ENCODE measurements at regions of chr4 and their contacts with region 1.

Region 1: DNA sequence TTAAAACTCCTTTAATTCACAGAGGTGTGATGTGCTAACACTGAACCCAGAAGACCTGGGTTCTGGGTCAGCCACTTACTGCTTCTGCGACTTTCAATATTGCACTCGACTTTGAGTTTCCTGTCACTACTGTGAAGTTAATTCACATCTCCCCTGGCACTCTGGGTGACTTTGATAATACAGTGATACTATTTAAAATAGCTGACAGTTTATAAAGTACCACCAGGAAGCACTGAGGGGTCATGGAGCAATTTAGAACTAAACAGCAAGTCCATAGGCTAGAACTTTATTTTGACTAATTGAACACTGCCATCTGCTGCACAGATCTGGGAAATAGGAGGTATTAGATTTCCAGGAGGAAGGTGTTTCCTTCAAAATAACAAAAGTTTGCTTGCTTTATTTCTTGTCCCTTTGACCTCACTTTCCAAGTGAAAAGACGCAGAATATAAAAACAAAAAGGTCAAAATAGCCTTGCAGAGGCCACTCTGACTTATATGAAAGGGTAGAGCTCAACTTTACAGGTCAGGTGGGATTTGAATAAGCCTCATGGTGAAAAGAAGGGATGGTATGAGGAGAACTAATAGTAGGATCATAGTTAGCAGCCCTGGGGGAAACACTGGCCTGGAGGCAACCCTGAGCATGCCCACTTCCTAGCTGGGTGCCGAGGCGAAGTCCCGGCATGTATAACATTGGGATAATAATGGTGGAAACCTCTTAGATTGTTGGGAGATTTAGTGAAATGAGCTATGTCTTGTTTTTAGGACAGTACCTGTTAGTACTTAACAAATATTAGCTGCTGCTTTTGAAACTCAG is 53.4 kb downstream of the ZNF518B start:
- DNase-seq: peak; percentile 2 to 17 (median 15)
- H3K4me3 ChIP-seq: no peak overlapping the region
- H3K4me3 Mint-ChIP-seq: no peak overlapping the region
- H3K27ac ChIP-seq: no peak overlapping the region
- H3K27ac Mint-ChIP-seq: no peak overlapping the region
- H3K4me1 ChIP-seq: no peaks in the 10 kb centered on the region
- H3K4me1 Mint-ChIP-seq: no peaks in the 10 kb centered on the region
- H3K27me3 ChIP-seq: no peaks in the 10 kb centered on the region
- H3K27me3 Mint-ChIP-seq: no peaks in the 10 kb centered on the region
- CTCF ChIP-seq: peak; percentile 16

Region 2: DNA sequence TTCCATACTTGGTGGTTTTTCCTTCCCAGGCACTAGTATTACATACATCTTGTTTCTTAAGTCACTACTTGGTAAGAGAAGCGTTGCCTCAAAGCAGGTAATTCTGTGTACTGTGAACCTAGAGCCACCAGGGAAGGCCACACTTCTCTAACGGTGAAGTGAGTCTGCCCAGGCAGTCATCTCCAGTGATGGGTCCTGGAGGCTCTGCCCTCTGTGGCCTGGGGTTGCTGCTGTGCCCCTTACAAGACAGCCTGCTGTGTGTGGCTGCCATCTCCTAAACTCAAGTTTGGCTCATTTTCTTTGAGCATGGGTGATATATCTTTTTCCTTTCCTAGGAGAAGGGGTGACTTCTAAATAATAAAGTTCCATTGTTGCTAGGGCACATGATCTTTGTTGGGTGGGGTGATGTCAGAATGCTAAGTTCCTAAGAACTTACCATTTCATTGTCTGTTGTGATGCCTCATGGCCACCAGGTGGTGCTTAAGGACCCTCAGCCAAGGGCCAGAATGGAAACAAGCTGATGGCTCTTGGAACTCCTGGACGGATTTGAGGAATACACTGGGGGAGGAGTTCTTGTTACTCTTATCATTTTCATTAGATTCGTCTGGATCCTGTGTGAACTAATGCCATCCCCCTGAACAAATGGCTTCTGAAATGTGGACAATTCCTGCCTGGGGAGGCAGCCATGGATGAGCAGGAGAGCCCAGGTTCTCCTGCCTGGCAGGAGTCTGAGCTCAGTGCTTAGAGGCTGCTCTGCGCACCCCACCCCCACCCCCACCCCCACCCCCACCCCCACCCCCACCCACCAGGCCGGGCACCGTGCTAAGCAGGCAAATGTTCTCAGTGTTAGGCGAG is 246.1 kb before region 1 on chr4:
- intact Hi-C with region 1: loop called (anchors 5 to 10 kb)
- DNase-seq: peak; percentile 42 to 64 (median 51)
- H3K4me3 ChIP-seq: no peak overlapping the region
- H3K4me3 Mint-ChIP-seq: no peak overlapping the region
- H3K27ac ChIP-seq: no peak overlapping the region
- H3K27ac Mint-ChIP-seq: peak overlapping the region in 3 of 7 donors; percentile 13 to 53 (median 42)
- H3K4me1 ChIP-seq: no peaks in the 10 kb centered on the region
- H3K4me1 Mint-ChIP-seq: peaks cover 10% of the 10 kb centered on the region
- H3K27me3 ChIP-seq: no peaks in the 10 kb centered on the region
- H3K27me3 Mint-ChIP-seq: peaks cover 0 to 2% (median 1%) of the 10 kb centered on the region in 3 donors
- CTCF ChIP-seq: peak; percentile 84

Region 3: GRCh38 chr4:10164877-10165283 is 239.0 kb before region 1 on chr4:
- intact Hi-C with region 1: loop called in 1 of 2 experiments (anchors 10 kb)
- DNase-seq: peak; percentile 19 to 43 (median 41)
- H3K4me3 ChIP-seq: no peak overlapping the region
- H3K4me3 Mint-ChIP-seq: no peak overlapping the region
- H3K27ac ChIP-seq: no peak overlapping the region
- H3K27ac Mint-ChIP-seq: no peak overlapping the region
- H3K4me1 ChIP-seq: no peaks in the 10 kb centered on the region
- H3K4me1 Mint-ChIP-seq: peaks cover 8% of the 10 kb centered on the region
- H3K27me3 ChIP-seq: no peaks in the 10 kb centered on the region
- H3K27me3 Mint-ChIP-seq: peaks cover 0 to 3% (median 2%) of the 10 kb centered on the region in 3 donors
- CTCF ChIP-seq: peak; percentile 84

Region 4: DNA sequence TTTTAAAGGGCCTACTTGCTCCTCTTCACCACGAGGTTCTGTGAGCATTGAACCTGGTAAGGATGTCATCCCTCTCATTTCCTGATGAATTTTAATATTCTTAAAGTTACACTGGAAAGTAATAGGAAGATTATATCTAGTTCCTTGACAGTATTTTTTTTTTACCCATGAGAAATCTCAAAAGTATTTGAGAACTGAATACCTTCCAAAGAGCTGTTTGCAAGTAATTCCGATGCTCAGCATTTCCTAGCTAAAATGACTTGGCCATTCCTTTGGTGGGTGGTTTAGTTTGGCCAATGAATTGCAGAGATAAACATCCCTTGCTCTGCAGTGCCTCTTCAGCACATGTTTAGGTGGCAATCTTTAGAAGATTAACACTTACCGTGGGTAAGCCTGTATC is 177.1 kb before region 1 on chr4:
- intact Hi-C with region 1: no loop called
- DNase-seq: no peak
- H3K4me3 ChIP-seq: no peak overlapping the region
- H3K4me3 Mint-ChIP-seq: no peak overlapping the region
- H3K27ac ChIP-seq: no peak overlapping the region
- H3K27ac Mint-ChIP-seq: no peak overlapping the region
- H3K4me1 ChIP-seq: peaks cover 15 to 17% of the 10 kb centered on the region in 2 donors
- H3K4me1 Mint-ChIP-seq: peaks cover 14% of the 10 kb centered on the region
- H3K27me3 ChIP-seq: no peaks in the 10 kb centered on the region
- H3K27me3 Mint-ChIP-seq: no peaks in the 10 kb centered on the region
- CTCF ChIP-seq: no peak

Region 5: GRCh38 chr4:10336471-10336870 is 67.4 kb before region 1 on chr4:
- intact Hi-C with region 1: no loop called
- DNase-seq: no peak
- H3K4me3 ChIP-seq: no peak overlapping the region
- H3K4me3 Mint-ChIP-seq: no peak overlapping the region
- H3K27ac ChIP-seq: no peak overlapping the region
- H3K27ac Mint-ChIP-seq: no peak overlapping the region
- H3K4me1 ChIP-seq: no peaks in the 10 kb centered on the region
- H3K4me1 Mint-ChIP-seq: no peaks in the 10 kb centered on the region
- H3K27me3 ChIP-seq: no peaks in the 10 kb centered on the region
- H3K27me3 Mint-ChIP-seq: peaks cover 6 to 9% (median 8%) of the 10 kb centered on the region in 3 donors
- CTCF ChIP-seq: no peak

Region 6: DNA sequence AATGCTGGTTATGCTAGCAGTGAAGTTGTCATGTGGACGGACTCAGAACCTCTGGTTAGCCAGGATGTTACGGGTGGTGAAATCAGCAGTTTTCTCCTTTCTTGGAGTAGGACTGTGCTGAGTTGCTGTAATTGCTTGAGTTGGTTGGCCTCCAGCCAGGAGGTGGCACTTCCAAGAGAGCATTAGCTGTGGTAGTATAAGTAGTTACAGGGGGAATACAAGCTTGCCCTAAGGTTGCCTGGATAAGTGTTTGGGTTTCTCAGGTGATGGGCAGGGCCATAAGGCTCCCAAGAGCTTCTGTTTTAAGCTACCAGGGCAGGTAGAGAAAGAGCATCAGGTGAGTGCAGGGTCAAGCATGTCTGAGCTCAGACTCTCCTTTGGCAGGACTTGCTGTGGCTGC is 49.6 kb before region 1 on chr4:
- intact Hi-C with region 1: no loop called
- DNase-seq: no peak
- H3K4me3 ChIP-seq: no peak overlapping the region
- H3K4me3 Mint-ChIP-seq: no peak overlapping the region
- H3K27ac ChIP-seq: no peak overlapping the region
- H3K27ac Mint-ChIP-seq: no peak overlapping the region
- H3K4me1 ChIP-seq: no peaks in the 10 kb centered on the region
- H3K4me1 Mint-ChIP-seq: no peaks in the 10 kb centered on the region
- H3K27me3 ChIP-seq: peaks cover 0 to 2% of the 10 kb centered on the region in 2 donors
- H3K27me3 Mint-ChIP-seq: peaks cover 2 to 10% (median 3%) of the 10 kb centered on the region in 3 donors
- CTCF ChIP-seq: no peak

Region 7: DNA sequence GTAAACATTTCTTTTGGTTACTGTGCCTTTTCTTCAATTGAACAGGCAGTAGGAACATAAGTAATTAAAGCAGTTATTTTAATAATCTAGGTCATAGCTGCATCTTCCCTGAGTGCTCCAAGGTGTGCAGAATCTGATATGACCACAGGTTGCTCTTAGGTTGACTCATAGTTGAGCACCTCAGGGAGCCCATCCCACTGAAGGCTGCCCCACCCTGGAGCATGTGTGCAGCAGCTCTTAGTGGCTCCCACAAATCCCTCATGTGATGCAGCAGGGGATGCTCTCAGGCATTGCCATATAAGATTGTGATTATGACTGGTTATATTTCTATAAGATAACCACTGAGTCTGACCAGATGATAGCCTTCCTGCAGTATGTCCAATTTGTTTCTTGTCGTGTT is 18.9 kb before region 1 on chr4:
- intact Hi-C with region 1: loop called in 1 of 2 experiments (anchors 1 kb)
- DNase-seq: no peak
- H3K4me3 ChIP-seq: no peak overlapping the region
- H3K4me3 Mint-ChIP-seq: no peak overlapping the region
- H3K27ac ChIP-seq: no peak overlapping the region
- H3K27ac Mint-ChIP-seq: no peak overlapping the region
- H3K4me1 ChIP-seq: no peaks in the 10 kb centered on the region
- H3K4me1 Mint-ChIP-seq: no peaks in the 10 kb centered on the region
- H3K27me3 ChIP-seq: peaks cover 0 to 2% of the 10 kb centered on the region in 2 donors
- H3K27me3 Mint-ChIP-seq: peaks cover 0 to 5% (median 0%) of the 10 kb centered on the region in 3 donors
- CTCF ChIP-seq: no peak

Measured in CD14-positive monocyte (primary cell).